Calu3 (cell line): ENCODE measurements at regions of chr2 and their contacts with region 1.

Region 1: DNA sequence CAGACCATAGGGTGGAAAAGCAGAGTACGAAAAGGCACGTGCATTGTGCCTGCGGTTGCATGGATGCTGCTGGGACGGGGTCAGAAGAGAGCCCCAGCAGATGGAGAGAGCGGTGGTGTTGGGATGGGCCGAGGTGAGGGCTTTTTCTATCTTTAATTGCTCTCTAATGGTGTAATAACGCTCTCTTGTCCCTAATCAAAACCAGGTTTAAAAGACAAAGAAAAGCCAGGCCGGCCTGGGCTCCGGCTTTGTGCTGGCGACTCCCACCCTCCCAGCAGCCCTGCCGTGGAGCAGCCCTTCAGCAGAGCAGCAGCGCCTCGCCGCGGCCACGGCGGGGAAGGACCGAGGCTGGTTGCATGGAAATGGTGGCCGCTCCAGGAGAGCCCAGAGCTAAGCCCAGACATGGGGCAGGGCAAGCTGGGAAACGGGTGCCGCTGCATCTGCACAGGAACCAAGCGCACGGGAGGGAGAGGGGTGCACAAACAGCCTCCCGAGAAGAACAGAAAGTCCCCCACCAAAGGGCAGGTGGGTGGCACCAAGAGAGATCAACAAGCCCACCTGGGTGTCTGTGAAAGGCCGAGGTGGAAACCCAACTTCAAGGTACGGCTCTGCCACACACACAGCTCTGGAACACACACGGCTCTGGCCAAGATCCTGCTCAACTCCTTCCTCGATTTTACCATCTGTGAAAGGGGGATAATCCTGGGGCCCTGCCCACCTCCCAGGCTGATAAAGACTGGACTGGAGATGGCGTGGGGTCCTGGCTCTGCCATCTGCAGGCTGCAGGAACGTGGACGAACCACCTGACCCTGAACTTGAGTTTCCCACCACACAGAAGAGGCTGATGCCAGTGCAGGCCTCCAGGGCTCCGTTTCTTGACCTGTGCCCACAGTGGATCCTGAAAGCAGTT is 15.0 kb downstream of the HS1BP3 start:
- DNase-seq: peak; percentile 93
- H3K4me3 Mint-ChIP-seq: peak overlapping the region; percentile 29
- H3K27ac Mint-ChIP-seq: peak overlapping the region; percentile 49
- H3K4me1 Mint-ChIP-seq: peaks cover 29% of the 10 kb centered on the region
- H3K27me3 Mint-ChIP-seq: no peaks in the 10 kb centered on the region
- CTCF ChIP-seq: peak; percentile 92

Region 2: GRCh38 chr2:20411361-20411894 is 224.5 kb before region 1 on chr2:
- CTCF ChIA-PET with region 1: interaction called, 31 read pairs
- intact Hi-C with region 1: loop called (anchors 1 kb)
- DNase-seq: peak; percentile 89
- H3K4me3 Mint-ChIP-seq: no peak overlapping the region
- H3K27ac Mint-ChIP-seq: no peak overlapping the region
- H3K4me1 Mint-ChIP-seq: no peaks in the 10 kb centered on the region
- H3K27me3 Mint-ChIP-seq: no peaks in the 10 kb centered on the region
- CTCF ChIP-seq: peak; percentile 91

Region 3: DNA sequence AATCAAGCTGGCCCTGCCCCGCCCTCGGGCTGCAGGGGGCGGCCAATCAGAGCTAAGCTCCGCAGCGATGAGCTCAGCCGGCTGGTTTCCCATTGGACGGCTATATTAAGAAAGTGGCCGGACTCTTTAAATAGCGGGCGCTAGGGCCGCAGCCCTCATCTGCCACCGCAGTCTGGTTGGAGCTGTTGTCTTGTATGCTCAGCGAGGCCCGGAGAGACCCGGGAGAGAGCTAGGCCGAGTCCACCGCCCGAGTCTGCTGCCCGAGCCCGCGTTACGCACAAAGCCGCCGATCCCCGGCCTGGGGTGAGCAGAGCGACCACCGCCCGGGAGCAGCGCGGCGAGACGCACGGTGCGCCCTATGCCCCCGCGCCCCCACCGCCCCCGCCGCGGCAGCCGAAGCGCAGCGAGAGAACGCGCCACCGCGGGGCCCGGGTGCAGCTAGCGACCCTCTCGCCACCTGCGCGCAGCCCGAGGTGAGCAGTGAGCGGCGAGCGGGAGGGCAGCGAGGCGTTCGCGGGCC is 189.0 kb before region 1 on chr2 and contains the start of gene RHOB:
- CTCF ChIA-PET with region 1: interaction called, 50 read pairs
- intact Hi-C with region 1: loop called (anchors 1 kb)
- DNase-seq: peak; percentile 98
- H3K4me3 Mint-ChIP-seq: peak within 1 kb of the TSS; percentile 89
- H3K27ac Mint-ChIP-seq: peak within 1 kb of the TSS; percentile 87
- H3K4me1 Mint-ChIP-seq: peaks cover 38% of the 10 kb centered on the region
- H3K27me3 Mint-ChIP-seq: no peaks in the 10 kb centered on the region
- CTCF ChIP-seq: no peak
- total RNA-seq, gene RHOB: 143 and 147 TPM in 2 replicates

Region 4: GRCh38 chr2:20584637-20585321 is 51.2 kb before region 1 on chr2:
- CTCF ChIA-PET with region 1: no interaction called
- intact Hi-C with region 1: loop called (anchors 5 kb)
- DNase-seq: peak; percentile 86
- H3K4me3 Mint-ChIP-seq: no peak overlapping the region
- H3K27ac Mint-ChIP-seq: peak overlapping the region; percentile 39
- H3K4me1 Mint-ChIP-seq: peaks cover 30% of the 10 kb centered on the region
- H3K27me3 Mint-ChIP-seq: no peaks in the 10 kb centered on the region
- CTCF ChIP-seq: no peak

Region 5: DNA sequence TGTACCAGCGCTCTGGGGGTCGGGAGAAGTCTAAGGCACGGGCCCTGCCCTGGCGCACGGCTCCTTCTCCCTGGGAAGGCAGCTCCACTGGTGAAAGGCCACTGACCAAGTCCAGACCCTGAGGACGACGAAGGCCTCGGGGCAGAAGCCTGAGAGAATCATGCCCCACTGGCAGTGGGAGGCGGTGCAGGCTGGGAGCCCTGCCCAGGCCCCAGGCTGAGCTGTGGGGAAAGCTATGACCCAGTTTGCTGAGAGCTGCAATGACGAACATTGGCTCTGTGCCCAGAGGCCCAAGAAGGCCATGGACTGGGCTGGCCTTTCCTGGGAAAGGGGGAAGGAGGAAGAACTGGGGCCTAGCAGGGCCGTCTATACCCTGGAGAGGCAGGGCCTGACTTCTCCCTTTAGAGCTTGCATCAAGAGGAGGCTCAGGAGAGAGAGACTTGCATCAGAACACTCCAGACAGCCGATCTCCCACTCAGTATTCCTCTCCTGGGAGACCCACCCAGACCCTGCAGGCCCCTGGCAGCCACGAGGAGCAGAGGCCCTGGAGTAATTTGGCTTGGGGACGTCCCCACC is 17.9 kb before region 1 on chr2:
- CTCF ChIA-PET with region 1: interaction called, 18 read pairs
- intact Hi-C with region 1: loop called (anchors 1 kb)
- DNase-seq: peak; percentile 93
- H3K4me3 Mint-ChIP-seq: no peak overlapping the region
- H3K27ac Mint-ChIP-seq: peak overlapping the region; percentile 87
- H3K4me1 Mint-ChIP-seq: peaks cover 36% of the 10 kb centered on the region
- H3K27me3 Mint-ChIP-seq: no peaks in the 10 kb centered on the region
- CTCF ChIP-seq: peak; percentile 51

Region 6: DNA sequence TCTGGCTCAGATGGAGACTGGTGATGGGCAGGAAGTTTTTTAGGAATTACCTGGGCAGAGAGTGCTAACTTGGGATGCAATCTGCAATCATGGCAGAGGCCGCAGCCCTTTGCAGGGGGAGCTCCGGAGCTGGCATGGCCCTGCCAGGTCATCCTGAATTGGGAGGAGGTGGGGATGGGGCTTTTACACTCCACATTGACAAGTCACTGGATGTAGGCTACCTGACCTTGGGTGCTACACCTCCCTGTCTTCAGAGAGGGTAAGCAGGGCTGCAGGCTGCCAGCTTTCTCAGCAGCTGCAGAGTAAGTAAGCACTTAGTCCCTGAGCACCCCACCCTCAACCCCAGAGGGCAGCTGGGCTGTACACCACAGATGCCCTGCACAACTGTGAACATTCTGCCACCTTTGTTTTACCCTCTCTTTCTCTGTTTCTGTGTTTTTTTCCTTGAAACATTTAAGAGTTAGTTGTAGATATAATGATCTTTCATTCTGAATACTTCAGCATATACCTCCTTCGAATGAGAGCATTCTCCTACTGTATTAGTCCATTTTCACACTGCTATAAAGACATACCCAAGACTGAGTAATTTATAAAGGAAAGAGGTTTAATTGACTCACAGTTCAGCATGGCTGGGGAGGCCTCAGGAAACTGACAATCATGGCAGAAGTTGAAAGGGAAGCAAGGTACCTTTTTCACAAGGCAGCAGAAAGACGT is 21.7 kb after region 1 on chr2:
- CTCF ChIA-PET with region 1: no interaction called
- intact Hi-C with region 1: no loop called
- DNase-seq: no peak
- H3K4me3 Mint-ChIP-seq: no peak overlapping the region
- H3K27ac Mint-ChIP-seq: no peak overlapping the region
- H3K4me1 Mint-ChIP-seq: no peaks in the 10 kb centered on the region
- H3K27me3 Mint-ChIP-seq: peaks cover 85% of the 10 kb centered on the region
- CTCF ChIP-seq: no peak

Region 7: DNA sequence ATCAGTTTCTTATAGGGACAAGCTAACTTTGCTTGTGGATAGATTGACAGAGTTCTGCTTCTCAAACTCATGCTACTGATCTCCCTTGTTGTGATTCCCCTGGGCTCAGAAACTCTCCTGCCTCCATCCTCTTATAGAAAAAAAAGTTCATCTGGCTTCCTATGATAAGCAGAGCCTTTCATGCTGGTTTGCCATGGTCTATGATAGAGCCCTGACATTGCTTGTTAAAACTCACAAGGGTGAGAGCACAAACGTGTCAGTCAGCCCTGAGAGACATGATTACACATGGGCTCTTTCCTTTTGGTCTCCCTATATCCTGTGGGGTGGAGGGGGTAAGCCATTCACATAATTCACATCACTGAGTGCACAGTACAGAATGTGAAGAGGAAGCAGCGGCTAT is 609.6 kb after region 1 on chr2:
- CTCF ChIA-PET with region 1: no interaction called
- intact Hi-C with region 1: no loop called
- DNase-seq: no peak
- H3K4me3 Mint-ChIP-seq: no peak overlapping the region
- H3K27ac Mint-ChIP-seq: no peak overlapping the region
- H3K4me1 Mint-ChIP-seq: no peaks in the 10 kb centered on the region
- H3K27me3 Mint-ChIP-seq: peaks cover 26% of the 10 kb centered on the region
- CTCF ChIP-seq: no peak